Gastrocnemius medialis (tissue), 4 donors: ENCODE measurements at regions of chr18 and their contacts with region 1.

Region 1: GRCh38 chr18:3360211-3360610 is 89.8 kb upstream of the TGIF1 start:
- DNase-seq: no peak
- ATAC-seq: no peak
- H3K4me3 ChIP-seq: no peak overlapping the region
- H3K27ac ChIP-seq: no peak overlapping the region
- H3K4me1 ChIP-seq: no peaks in the 10 kb centered on the region
- H3K27me3 ChIP-seq: no peaks in the 10 kb centered on the region
- CTCF ChIP-seq: no peak
- POLR2A ChIP-seq: no peak

Region 2: GRCh38 chr18:3319399-3319798 is 40.8 kb before region 1 on chr18:
- in situ Hi-C with region 1: loop called in 1 of 4 experiments (anchors 5 kb)
- intact Hi-C with region 1: no loop called
- DNase-seq: no peak
- ATAC-seq: no peak
- H3K4me3 ChIP-seq: no peak overlapping the region
- H3K27ac ChIP-seq: no peak overlapping the region
- H3K4me1 ChIP-seq: no peaks in the 10 kb centered on the region
- H3K27me3 ChIP-seq: no peaks in the 10 kb centered on the region
- CTCF ChIP-seq: no peak
- POLR2A ChIP-seq: no peak

Region 3: DNA sequence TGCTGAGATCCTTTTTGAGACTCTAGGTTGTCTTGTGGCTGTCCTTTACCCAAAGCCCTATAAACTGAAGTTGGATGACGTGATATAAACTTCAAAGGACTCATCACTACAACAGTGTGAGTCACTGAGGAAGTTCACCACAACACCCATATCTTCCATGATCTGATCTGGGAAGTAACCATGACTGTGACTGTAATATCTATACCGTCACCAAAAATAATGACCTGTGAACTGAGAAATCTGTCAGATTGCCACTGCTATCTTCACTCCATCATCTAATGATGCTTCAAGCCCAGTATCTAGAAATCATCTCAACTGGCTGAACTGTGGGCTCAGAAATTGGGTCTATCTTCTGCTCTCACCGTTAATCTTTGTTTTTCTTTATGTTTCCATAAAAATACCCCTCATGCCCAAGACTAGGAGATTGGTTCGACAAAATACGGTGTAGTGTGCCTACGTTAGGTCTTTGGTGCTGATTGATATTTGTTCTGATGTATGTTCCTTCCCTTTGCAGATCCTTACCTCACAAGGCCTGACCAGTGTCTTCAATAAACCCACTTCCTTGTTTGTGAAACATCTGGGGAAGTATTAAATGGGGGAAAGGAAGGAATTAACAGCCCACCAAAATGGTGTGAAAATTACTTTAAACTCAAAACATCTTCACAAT is 20.1 kb before region 1 on chr18:
- in situ Hi-C with region 1: no loop called
- intact Hi-C with region 1: no loop called
- DNase-seq: no peak
- ATAC-seq: no peak
- H3K4me3 ChIP-seq: no peak overlapping the region
- H3K27ac ChIP-seq: no peak overlapping the region
- H3K4me1 ChIP-seq: no peaks in the 10 kb centered on the region
- H3K27me3 ChIP-seq: no peaks in the 10 kb centered on the region
- CTCF ChIP-seq: no peak
- POLR2A ChIP-seq: no peak